Aorta (tissue), 5 donors: ENCODE measurements at regions of chr1 and their contacts with region 1.

Region 1: GRCh38 chr1:211323156-211324063 is 3.2 kb upstream of the TRAF5 start:
- DNase-seq: no peak
- ATAC-seq: no peak
- H3K4me3 ChIP-seq: no peak overlapping the region
- H3K27ac ChIP-seq: no peak overlapping the region
- H3K4me1 ChIP-seq: no peaks in the 10 kb centered on the region
- H3K27me3 ChIP-seq: no peaks in the 10 kb centered on the region

Region 2: GRCh38 chr1:211359876-211360275 is 36.5 kb after region 1 on chr1:
- intact Hi-C with region 1: loop called in 1 of 2 experiments (anchors 5 kb)
- DNase-seq: no peak
- ATAC-seq: no peak
- H3K4me3 ChIP-seq: no peak overlapping the region
- H3K27ac ChIP-seq: peak overlapping the region in 1 of 2 donors; percentile 38
- H3K4me1 ChIP-seq: peaks cover 0 to 5% of the 10 kb centered on the region in 2 donors
- H3K27me3 ChIP-seq: no peaks in the 10 kb centered on the region

Region 3: DNA sequence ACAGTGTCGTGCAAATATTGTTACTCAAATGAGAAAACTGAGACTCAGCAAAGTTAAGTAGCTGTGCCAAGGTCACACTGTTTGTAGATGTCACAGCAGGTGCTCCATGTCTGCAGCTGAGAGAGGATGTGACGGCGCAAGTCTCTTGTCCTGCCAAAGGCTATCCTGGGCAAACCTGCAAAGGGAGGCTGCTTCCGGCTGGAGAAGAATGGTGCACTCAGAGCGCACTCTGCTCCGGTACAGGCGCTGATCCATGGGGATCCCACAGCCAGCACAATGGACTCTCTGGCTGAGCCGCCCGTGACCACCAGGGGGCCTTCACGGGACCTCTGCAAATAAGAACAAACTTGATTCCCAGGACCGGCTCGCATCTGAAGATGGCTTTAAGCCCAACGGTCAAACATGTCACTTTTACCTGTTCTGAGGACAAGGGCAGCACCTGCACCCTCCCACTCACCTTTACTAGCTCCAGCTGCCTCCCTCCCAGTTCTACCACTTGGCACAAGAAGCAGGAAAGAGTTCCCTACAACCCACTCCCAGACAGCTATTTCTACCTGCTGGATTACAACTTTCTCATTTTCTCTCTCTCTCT is 146.6 kb after region 1 on chr1:
- intact Hi-C with region 1: loop called (anchors 5 kb)
- DNase-seq: peak; percentile 82 to 93
- ATAC-seq: peak; percentile 81
- H3K4me3 ChIP-seq: no peak overlapping the region
- H3K27ac ChIP-seq: no peak overlapping the region
- H3K4me1 ChIP-seq: no peaks in the 10 kb centered on the region
- H3K27me3 ChIP-seq: no peaks in the 10 kb centered on the region

Region 4: DNA sequence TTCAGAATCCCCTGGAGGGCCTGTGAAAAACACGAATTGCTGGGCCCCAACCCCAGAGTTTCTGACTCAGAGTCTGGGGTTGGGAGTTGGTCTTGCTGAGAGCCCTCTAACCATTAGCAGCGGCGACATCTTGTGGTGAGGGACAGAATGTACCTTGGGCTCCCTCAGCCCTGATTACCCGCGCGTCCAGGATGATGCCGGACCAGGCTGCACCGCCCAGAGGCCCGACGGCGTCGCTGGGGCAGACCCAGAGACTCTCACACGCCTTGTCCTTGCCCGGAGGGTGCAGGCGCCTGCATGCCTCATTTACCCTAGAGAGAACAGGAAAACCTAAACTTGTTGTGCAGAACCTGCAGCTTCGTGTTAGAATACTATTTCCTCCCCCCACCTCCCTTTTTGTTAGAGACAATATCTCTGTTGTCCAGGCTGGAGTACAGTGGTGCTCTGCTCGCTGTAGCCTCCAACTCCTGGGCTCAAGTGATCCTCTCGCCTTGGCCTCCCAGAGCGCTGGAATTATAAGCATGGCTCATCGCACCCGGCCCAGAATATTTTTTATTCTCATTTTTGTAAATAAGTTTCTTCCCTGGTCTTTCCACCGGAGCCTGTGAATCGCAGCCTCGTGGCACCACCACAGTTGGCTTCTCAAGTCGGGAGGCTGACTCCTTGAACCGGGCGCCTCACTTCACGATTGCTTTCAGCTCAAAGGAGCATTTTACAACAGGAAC is 190.8 kb after region 1 on chr1:
- intact Hi-C with region 1: loop called (anchors 2 to 5 kb)
- DNase-seq: peak; percentile 90 to 92
- ATAC-seq: peak; percentile 89
- H3K4me3 ChIP-seq: no peak overlapping the region
- H3K27ac ChIP-seq: no peak overlapping the region
- H3K4me1 ChIP-seq: no peaks in the 10 kb centered on the region
- H3K27me3 ChIP-seq: no peaks in the 10 kb centered on the region

Region 5: GRCh38 chr1:211654838-211655787 is 331.7 kb after region 1 on chr1:
- intact Hi-C with region 1: loop called in 1 of 2 experiments (anchors 10 kb)
- DNase-seq: peak; percentile 92 to 97
- ATAC-seq: peak; percentile 92
- H3K4me3 ChIP-seq: no peak overlapping the region
- H3K27ac ChIP-seq: no peak overlapping the region
- H3K4me1 ChIP-seq: no peaks in the 10 kb centered on the region
- H3K27me3 ChIP-seq: no peaks in the 10 kb centered on the region